T-cell (primary cell): ENCODE measurements at regions of chr5 and their contacts with region 1.

Region 1: DNA sequence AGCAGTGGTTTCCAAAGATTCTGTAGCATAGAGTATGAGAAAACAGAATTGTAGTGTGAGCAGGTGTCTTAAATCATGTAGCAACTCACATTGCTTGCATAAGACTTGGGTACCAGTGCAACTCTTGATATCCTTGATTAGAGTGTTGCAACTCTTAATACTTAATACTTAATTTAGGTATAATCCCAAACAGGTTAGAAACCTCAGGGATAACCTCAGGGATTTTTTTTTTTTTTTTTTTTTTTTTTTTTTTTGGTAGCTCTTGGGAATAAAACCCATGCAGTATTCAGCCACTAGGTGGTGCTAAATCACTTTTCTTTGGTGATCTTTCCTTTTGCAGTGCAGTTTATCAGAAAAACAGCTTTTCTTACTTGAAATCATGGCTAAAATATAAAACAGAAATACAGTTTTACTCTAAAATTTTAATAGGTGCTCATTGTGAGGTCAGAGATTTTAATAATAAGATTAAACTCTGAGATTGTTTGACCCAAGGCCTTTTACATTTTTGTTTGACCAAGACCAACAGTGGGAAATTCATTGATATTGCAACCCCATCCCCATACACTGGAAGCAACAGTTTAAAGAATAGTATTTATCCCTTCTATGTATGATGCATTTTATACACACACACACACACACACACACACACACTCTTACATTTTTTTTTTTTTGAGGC is 55.3 kb downstream of the ERAP1 start:
- DNase-seq: peak in 12 of 35 experiments; percentile 9 to 84 (median 38)
- ATAC-seq: peak in 1 of 4 experiments; percentile 28
- H3K4me3 ChIP-seq: no peak overlapping the region
- H3K4me3 Mint-ChIP-seq: no peak overlapping the region
- H3K27ac ChIP-seq: no peak overlapping the region
- H3K27ac Mint-ChIP-seq: no peak overlapping the region
- H3K4me1 ChIP-seq: no peaks in the 10 kb centered on the region
- H3K4me1 Mint-ChIP-seq: peaks cover 0 to 3% (median 2%) of the 10 kb centered on the region in 3 donors
- H3K27me3 ChIP-seq: no peaks in the 10 kb centered on the region
- H3K27me3 Mint-ChIP-seq: no peaks in the 10 kb centered on the region

Region 2: DNA sequence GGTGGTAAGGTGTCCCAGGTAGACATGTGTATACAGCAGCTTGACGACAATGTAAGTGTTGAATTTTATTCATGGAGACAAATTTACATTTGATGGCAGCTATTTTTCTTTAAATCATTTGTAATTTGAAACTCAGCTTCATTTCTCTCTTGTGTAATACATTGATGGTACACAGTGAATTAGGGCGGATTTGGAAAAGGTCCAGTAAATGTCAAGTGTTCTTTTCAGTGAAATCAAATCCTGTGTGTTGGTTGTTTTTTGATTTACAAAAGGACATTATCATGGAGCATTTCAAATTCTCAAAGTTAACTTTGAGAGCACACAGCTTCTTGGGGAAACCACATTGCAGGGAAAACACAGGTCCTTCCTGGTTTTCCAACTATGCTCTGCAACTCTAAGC is 289.4 kb before region 1 on chr5:
- CTCF ChIA-PET with region 1: no interaction called
- POLR2A ChIA-PET with region 1: no interaction called
- DNase-seq: no peak
- ATAC-seq: no peak
- H3K4me3 ChIP-seq: no peak overlapping the region
- H3K4me3 Mint-ChIP-seq: no peak overlapping the region
- H3K27ac ChIP-seq: no peak overlapping the region
- H3K27ac Mint-ChIP-seq: no peak overlapping the region
- H3K4me1 ChIP-seq: no peaks in the 10 kb centered on the region
- H3K4me1 Mint-ChIP-seq: no peaks in the 10 kb centered on the region
- H3K27me3 ChIP-seq: no peaks in the 10 kb centered on the region
- H3K27me3 Mint-ChIP-seq: peaks cover 16 to 29% of the 10 kb centered on the region in 2 donors

Region 3: GRCh38 chr5:96734871-96735325 is 17.6 kb before region 1 on chr5:
- CTCF ChIA-PET with region 1: no interaction called
- POLR2A ChIA-PET with region 1: interaction called in 1 of 2 experiments, 22 read pairs
- DNase-seq: no peak
- ATAC-seq: no peak
- H3K4me3 ChIP-seq: no peak overlapping the region
- H3K4me3 Mint-ChIP-seq: no peak overlapping the region
- H3K27ac ChIP-seq: no peak overlapping the region
- H3K27ac Mint-ChIP-seq: peak overlapping the region; percentile 63 to 72
- H3K4me1 ChIP-seq: peaks cover 0 to 3% of the 10 kb centered on the region in 2 experiments
- H3K4me1 Mint-ChIP-seq: peaks cover 15 to 21% (median 16%) of the 10 kb centered on the region in 3 donors
- H3K27me3 ChIP-seq: no peaks in the 10 kb centered on the region
- H3K27me3 Mint-ChIP-seq: no peaks in the 10 kb centered on the region

Region 4: GRCh38 chr5:96771395-96771794 is 18.9 kb after region 1 on chr5:
- CTCF ChIA-PET with region 1: interaction called, 7 to 15 read pairs
- POLR2A ChIA-PET with region 1: interaction called in 1 of 2 experiments, 3 read pairs
- DNase-seq: no peak
- ATAC-seq: no peak
- H3K4me3 ChIP-seq: no peak overlapping the region
- H3K4me3 Mint-ChIP-seq: no peak overlapping the region
- H3K27ac ChIP-seq: peak overlapping the region; percentile 48
- H3K27ac Mint-ChIP-seq: peak overlapping the region; percentile 76 to 85
- H3K4me1 ChIP-seq: no peaks in the 10 kb centered on the region
- H3K4me1 Mint-ChIP-seq: peaks cover 20 to 38% (median 25%) of the 10 kb centered on the region in 3 donors
- H3K27me3 ChIP-seq: no peaks in the 10 kb centered on the region
- H3K27me3 Mint-ChIP-seq: no peaks in the 10 kb centered on the region

Region 5: GRCh38 chr5:96816411-96816939 is 64.0 kb after region 1 on chr5:
- CTCF ChIA-PET with region 1: interaction called in 1 of 2 experiments, 6 read pairs
- POLR2A ChIA-PET with region 1: interaction called, 3 to 18 read pairs
- DNase-seq: peak; percentile 29 to 88 (median 60)
- ATAC-seq: peak; percentile 87 to 89 (median 89)
- H3K4me3 ChIP-seq: peak overlapping the region; percentile 40 to 50
- H3K4me3 Mint-ChIP-seq: peak overlapping the region; percentile 76 to 82 (median 80)
- H3K27ac ChIP-seq: peak overlapping the region; percentile 83
- H3K27ac Mint-ChIP-seq: peak overlapping the region; percentile 91 to 98
- H3K4me1 ChIP-seq: peaks cover 33 to 41% of the 10 kb centered on the region in 2 experiments
- H3K4me1 Mint-ChIP-seq: peaks cover 87 to 89% (median 88%) of the 10 kb centered on the region in 3 donors
- H3K27me3 ChIP-seq: no peaks in the 10 kb centered on the region
- H3K27me3 Mint-ChIP-seq: no peaks in the 10 kb centered on the region

Region 6: GRCh38 chr5:96855031-96855872 is 102.8 kb after region 1 on chr5:
- CTCF ChIA-PET with region 1: no interaction called
- POLR2A ChIA-PET with region 1: no interaction called
- DNase-seq: no peak
- ATAC-seq: no peak
- H3K4me3 ChIP-seq: no peak overlapping the region
- H3K4me3 Mint-ChIP-seq: no peak overlapping the region
- H3K27ac ChIP-seq: no peak overlapping the region
- H3K27ac Mint-ChIP-seq: no peak overlapping the region
- H3K4me1 ChIP-seq: no peaks in the 10 kb centered on the region
- H3K4me1 Mint-ChIP-seq: no peaks in the 10 kb centered on the region
- H3K27me3 ChIP-seq: no peaks in the 10 kb centered on the region
- H3K27me3 Mint-ChIP-seq: no peaks in the 10 kb centered on the region

Region 7: DNA sequence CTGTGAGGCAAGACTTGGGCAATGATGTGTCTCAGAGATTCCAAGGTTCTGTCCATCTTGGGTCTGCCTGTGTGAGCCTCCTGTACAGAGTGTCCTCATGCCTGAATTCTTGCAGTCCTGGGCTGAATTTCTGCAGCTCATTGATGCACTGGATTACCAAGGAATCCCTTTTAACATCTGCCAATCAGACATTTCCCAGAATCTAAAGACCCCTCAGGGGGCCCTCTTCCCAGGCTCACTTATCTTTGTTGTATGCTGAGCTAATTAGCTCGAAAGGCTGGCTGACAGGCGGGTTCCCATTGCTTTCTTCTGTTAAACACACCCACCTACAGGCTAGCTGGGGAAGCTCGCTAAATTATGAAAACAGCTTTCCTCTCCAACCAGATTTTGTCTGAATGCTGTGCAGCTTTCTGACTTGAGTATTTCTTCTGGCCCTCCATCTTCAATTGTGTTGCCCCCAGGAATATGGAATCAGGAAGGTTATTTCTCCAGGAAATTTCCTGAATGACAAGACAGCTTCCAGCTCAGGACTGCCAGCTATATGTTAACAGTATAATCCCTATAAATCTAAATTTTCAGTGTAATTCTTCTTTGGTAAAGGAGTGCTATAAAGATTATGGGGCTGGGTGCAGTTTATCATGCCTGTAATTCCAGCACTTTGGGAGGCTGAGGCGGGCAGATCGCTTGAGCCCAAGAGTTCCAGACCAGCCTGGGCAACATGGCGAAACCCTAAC is 390.2 kb after region 1 on chr5 and contains the start of gene LIX1:
- CTCF ChIA-PET with region 1: interaction called, 3 to 11 read pairs
- POLR2A ChIA-PET with region 1: no interaction called
- DNase-seq: peak in 14 of 35 experiments; percentile 1 to 44 (median 12)
- ATAC-seq: peak; percentile 52 to 73 (median 58)
- H3K4me3 ChIP-seq: no peak within 1 kb of the TSS
- H3K4me3 Mint-ChIP-seq: no peak within 1 kb of the TSS
- H3K27ac ChIP-seq: no peak within 1 kb of the TSS
- H3K27ac Mint-ChIP-seq: no peak within 1 kb of the TSS
- H3K4me1 ChIP-seq: no peaks in the 10 kb centered on the region
- H3K4me1 Mint-ChIP-seq: no peaks in the 10 kb centered on the region
- H3K27me3 ChIP-seq: peaks cover 0 to 3% of the 10 kb centered on the region in 2 experiments
- H3K27me3 Mint-ChIP-seq: peaks cover 11 to 13% of the 10 kb centered on the region in 2 donors
- total RNA-seq, gene LIX1: not detected

Region 8: DNA sequence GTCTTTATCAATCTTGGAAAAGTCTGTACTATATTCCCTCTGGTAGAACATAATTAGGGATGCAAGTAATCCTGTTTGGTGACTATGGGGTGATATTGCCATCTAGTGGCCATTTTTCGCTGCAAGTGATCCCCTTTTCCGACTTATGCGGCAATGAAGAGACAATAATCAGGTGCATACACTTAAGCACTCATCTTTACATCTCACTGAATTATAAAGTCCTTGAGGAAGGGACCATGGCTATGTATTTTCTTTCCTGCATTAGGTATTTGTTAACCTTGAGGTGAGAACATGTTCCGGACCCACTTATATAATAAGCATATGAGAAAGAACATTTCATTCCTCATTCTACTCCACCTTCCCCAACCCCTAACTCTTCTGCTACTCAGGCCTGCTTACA is 409.6 kb after region 1 on chr5:
- CTCF ChIA-PET with region 1: interaction called, 28 to 67 read pairs
- POLR2A ChIA-PET with region 1: interaction called in 1 of 2 experiments, 12 read pairs
- DNase-seq: peak in 24 of 35 experiments; percentile 5 to 82 (median 36)
- ATAC-seq: peak in 2 of 4 experiments; percentile 36 to 48
- H3K4me3 ChIP-seq: no peak overlapping the region
- H3K4me3 Mint-ChIP-seq: no peak overlapping the region
- H3K27ac ChIP-seq: no peak overlapping the region
- H3K27ac Mint-ChIP-seq: no peak overlapping the region
- H3K4me1 ChIP-seq: peaks cover 0 to 2% of the 10 kb centered on the region in 2 experiments
- H3K4me1 Mint-ChIP-seq: peaks cover 0 to 11% (median 7%) of the 10 kb centered on the region in 3 donors
- H3K27me3 ChIP-seq: no peaks in the 10 kb centered on the region
- H3K27me3 Mint-ChIP-seq: no peaks in the 10 kb centered on the region

Region 9: GRCh38 chr5:97167435-97167834 is 415.0 kb after region 1 on chr5:
- CTCF ChIA-PET with region 1: interaction called, 13 to 67 read pairs
- POLR2A ChIA-PET with region 1: no interaction called
- DNase-seq: no peak
- ATAC-seq: peak in 1 of 4 experiments; percentile 19
- H3K4me3 ChIP-seq: no peak overlapping the region
- H3K4me3 Mint-ChIP-seq: peak overlapping the region; percentile 31 to 63 (median 37)
- H3K27ac ChIP-seq: peak overlapping the region; percentile 9
- H3K27ac Mint-ChIP-seq: peak overlapping the region; percentile 81 to 87
- H3K4me1 ChIP-seq: peaks cover 0 to 2% of the 10 kb centered on the region in 2 experiments
- H3K4me1 Mint-ChIP-seq: peaks cover 8 to 30% (median 20%) of the 10 kb centered on the region in 3 donors
- H3K27me3 ChIP-seq: no peaks in the 10 kb centered on the region
- H3K27me3 Mint-ChIP-seq: no peaks in the 10 kb centered on the region